ENCODE measurements at regions of chr6 and their contacts with region 1.

Region 1: DNA sequence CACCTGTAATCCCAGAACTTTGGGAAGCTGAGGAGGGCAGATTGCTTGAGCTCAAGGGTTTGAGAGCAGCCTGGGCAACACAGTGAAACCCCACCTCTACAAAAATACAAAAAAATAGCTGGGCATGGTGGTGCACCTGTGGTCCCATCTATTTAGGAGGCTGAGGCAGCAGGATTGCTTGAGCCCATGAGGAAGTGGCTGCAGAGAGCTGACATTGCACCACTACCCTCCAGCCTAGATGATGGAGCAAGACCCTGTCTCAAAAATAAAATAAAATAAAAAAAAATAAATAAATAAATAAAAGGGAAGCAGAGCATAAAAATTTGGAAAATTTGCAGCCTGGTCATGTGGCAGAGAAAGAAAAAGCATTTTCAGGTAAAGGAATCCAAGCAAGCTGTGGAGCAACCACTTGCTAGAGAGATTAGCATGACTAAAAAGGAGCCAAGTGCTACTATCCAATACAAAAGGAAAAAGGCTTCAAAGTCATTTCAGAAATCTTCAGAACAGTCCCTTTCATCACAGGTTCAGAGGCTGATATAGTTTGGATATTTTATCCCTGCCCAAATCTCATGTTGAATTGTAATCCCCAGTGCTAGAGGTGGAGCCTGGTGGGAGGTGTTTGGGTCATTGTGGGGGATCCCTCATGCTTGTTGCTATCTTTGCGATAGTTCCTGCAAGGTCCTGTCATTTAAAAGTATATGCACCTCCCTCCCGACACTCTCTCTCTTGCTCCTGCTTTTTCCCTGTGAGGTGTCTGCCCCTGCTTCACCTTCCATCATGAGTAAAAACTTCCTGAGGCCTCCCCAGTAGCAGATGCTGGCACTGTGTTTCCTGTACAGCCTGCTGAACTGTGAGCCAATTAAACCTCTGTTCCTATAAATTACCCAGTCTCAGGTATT is 11.2 kb upstream of the TTK start:
- DNase-seq: no peak
- H3K4me3 ChIP-seq: no peak overlapping the region
- H3K27ac ChIP-seq: no peak overlapping the region
- H3K4me1 ChIP-seq: no peaks in the 10 kb centered on the region
- H3K27me3 ChIP-seq: no peaks in the 10 kb centered on the region
- CTCF ChIP-seq: no peak
- POLR2A ChIP-seq: no peak

Region 2: DNA sequence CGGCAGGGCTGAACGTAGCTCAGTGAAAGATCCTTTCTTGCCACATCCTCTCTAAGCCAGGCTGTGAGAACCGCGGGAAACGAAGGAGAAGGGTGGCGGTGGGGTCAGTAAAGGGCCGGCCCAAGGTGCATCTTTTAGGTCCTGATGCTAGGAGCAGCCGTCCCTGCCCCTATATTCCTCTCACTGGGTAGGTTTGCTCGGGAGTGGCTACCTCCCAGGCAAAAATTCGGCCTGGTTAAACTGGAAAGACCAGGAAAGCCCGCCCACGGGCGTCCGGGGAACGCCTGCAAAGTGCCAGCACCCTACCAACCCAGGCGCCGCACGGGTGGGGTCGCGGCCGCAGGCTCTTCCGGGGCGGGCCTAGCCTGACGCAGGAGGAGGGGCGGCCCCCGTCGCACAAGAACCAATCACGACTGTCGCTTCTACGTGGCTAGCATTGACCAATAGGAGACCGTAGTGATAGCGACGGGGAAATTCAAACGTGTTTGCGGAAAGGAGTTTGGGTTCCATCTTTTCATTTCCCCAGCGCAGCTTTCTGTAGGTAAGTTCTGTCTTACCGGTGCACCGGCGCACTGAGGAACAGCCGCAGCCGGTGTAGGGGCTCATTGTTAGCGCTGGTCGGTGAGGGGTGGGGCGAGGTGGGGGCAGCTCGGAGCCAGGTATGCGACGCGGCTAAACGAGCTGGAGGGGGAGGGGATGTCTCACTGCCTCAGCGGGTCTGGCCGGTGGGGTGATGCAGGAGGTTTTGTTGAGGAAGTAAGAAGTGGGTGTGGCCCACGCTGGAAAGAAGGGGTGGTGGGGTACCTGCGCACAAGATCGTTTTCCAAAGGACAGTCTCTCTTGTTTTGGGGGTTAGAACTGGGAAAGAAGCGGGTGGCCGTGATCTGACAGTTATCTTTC is 11.2 kb after region 1 on chr6 and contains the start of gene TTK:
- intact Hi-C with region 1: loop called (anchors 1 kb)
- DNase-seq: peak in 1 of 2 donors; percentile 96
- H3K4me3 ChIP-seq: peak within 1 kb of the TSS; percentile 65 to 67
- H3K27ac ChIP-seq: peak within 1 kb of the TSS; percentile 67
- H3K4me1 ChIP-seq: peaks cover 9% of the 10 kb centered on the region
- H3K27me3 ChIP-seq: no peaks in the 10 kb centered on the region
- CTCF ChIP-seq: no peak
- POLR2A ChIP-seq: peak in 1 of 2 donors; percentile 26
- total RNA-seq, gene TTK: 2.5 TPM

Region 3: GRCh38 chr6:81130969-81131368 is 1137.7 kb after region 1 on chr6:
- intact Hi-C with region 1: no loop called
- DNase-seq: no peak
- H3K4me3 ChIP-seq: no peak overlapping the region
- H3K27ac ChIP-seq: no peak overlapping the region
- H3K4me1 ChIP-seq: peaks cover 6% of the 10 kb centered on the region
- H3K27me3 ChIP-seq: no peaks in the 10 kb centered on the region
- CTCF ChIP-seq: no peak
- POLR2A ChIP-seq: no peak

Measured in vagina (tissue), 2 donors.